CD8-positive, alpha-beta T cell (primary cell): ENCODE measurements at regions of chr2 and their contacts with region 1.

Region 1: DNA sequence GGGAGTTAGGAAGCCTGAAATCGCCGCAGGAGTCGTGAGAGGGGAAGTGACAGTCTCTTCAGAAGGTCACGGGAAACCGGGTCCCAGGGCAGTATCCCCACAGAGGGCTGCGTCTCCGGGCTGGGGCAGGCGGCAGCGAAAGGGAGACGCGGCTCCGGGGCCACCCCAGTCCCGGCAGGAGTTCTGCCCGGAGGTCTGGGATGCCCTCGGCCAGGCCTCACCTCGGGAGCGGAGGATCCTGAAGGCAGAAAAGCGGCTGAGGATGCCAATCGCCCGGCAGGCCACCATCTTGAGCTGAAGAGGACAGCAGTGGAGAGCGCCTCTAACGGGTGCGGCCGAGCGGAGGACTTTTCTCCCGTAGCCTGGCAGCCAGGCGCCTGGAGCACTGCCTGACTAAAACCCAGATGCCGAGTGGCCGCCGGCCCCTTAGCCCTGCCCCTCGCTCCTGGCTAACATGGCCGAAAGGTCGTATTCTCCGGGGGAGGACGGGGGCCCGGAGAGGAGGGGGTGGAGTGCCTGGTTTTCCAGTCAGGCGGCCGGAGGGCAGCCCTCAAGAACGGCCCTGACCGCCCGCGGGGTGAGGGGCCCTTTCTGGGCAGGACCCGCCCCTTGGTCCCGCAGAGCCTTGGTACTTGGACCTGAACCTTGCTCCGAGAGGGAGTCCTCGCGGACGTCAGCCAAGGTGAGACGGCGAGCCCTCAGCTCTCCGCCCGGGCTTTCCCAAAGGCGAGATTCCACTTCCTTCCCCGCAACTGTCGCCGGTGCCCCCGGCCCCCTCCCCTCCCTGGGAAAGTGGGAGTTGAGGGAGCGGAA is at the starts of genes HADHA and HADHB:
- DNase-seq: peak; percentile 72 to 91 (median 84)
- ATAC-seq: peak; percentile 82
- H3K4me3 ChIP-seq: peak within 1 kb of the TSS; percentile 99
- H3K4me3 Mint-ChIP-seq: peak within 1 kb of the TSS; percentile 99
- H3K27ac ChIP-seq: peak within 1 kb of the TSS; percentile 99
- H3K27ac Mint-ChIP-seq: peak within 1 kb of the TSS; percentile 100
- H3K4me1 ChIP-seq: peaks cover 22% of the 10 kb centered on the region
- H3K4me1 Mint-ChIP-seq: peaks cover 60% of the 10 kb centered on the region
- H3K27me3 ChIP-seq: no peaks in the 10 kb centered on the region
- H3K27me3 Mint-ChIP-seq: no peaks in the 10 kb centered on the region
- CTCF ChIP-seq: no peak
- total RNA-seq, gene HADHA: 66.8 to 69.4 TPM
- total RNA-seq, gene HADHB: 26.0 to 26.1 TPM

Region 2: DNA sequence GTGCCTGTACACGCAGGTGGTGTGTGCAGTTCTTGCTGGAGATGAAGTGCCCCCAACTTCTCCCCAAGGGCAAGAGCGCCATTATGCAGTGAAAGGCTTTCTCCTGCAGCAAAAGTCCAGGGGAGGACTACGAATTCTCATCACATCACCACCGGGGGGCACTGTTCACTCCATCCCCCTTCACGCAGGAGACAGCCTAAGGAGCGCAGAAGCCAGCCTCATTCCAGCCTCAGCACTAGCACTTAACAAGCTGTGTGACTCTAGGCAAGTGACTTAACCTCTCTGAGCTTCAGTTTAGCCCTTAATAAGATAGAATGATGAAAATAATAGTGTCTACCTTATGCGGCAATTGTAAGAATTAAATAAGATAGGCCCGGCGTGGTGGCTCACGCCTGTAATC is 935.1 kb before region 1 on chr2:
- CTCF ChIA-PET with region 1: no interaction called
- POLR2A ChIA-PET with region 1: no interaction called
- intact Hi-C with region 1: no loop called
- DNase-seq: peak; percentile 40 to 80 (median 75)
- ATAC-seq: peak; percentile 39
- H3K4me3 ChIP-seq: no peak overlapping the region
- H3K4me3 Mint-ChIP-seq: peak overlapping the region; percentile 11
- H3K27ac ChIP-seq: no peak overlapping the region
- H3K27ac Mint-ChIP-seq: peak overlapping the region; percentile 79
- H3K4me1 ChIP-seq: peaks cover 90% of the 10 kb centered on the region
- H3K4me1 Mint-ChIP-seq: peaks cover 85% of the 10 kb centered on the region
- H3K27me3 ChIP-seq: no peaks in the 10 kb centered on the region
- H3K27me3 Mint-ChIP-seq: no peaks in the 10 kb centered on the region
- CTCF ChIP-seq: peak; percentile 51

Region 3: GRCh38 chr2:25982273-25982967 is 262.1 kb before region 1 on chr2 and contains the start of gene KIF3C:
- CTCF ChIA-PET with region 1: no interaction called
- POLR2A ChIA-PET with region 1: no interaction called
- intact Hi-C with region 1: loop called (anchors 5 kb)
- DNase-seq: peak; percentile 46 to 84 (median 76)
- ATAC-seq: peak; percentile 92
- H3K4me3 ChIP-seq: peak within 1 kb of the TSS; percentile 61 to 81
- H3K4me3 Mint-ChIP-seq: peak within 1 kb of the TSS; percentile 88
- H3K27ac ChIP-seq: peak within 1 kb of the TSS; percentile 26 to 28
- H3K27ac Mint-ChIP-seq: peak within 1 kb of the TSS; percentile 79
- H3K4me1 ChIP-seq: peaks cover 11% of the 10 kb centered on the region
- H3K4me1 Mint-ChIP-seq: peaks cover 17% of the 10 kb centered on the region
- H3K27me3 ChIP-seq: no peaks in the 10 kb centered on the region
- H3K27me3 Mint-ChIP-seq: no peaks in the 10 kb centered on the region
- CTCF ChIP-seq: no peak
- total RNA-seq, gene KIF3C: 1.5 to 2.3 TPM

Region 4: GRCh38 chr2:26299471-26300101 is 55.1 kb after region 1 on chr2:
- CTCF ChIA-PET with region 1: no interaction called
- POLR2A ChIA-PET with region 1: interaction called, 11 read pairs
- intact Hi-C with region 1: loop called (anchors 1 kb)
- DNase-seq: peak in 6 of 9 experiments; percentile 13 to 64 (median 29)
- ATAC-seq: peak; percentile 49
- H3K4me3 ChIP-seq: peak overlapping the region; percentile 78 to 84
- H3K4me3 Mint-ChIP-seq: no peak overlapping the region
- H3K27ac ChIP-seq: peak overlapping the region; percentile 68 to 80
- H3K27ac Mint-ChIP-seq: no peak overlapping the region
- H3K4me1 ChIP-seq: peaks cover 19% of the 10 kb centered on the region
- H3K4me1 Mint-ChIP-seq: no peaks in the 10 kb centered on the region
- H3K27me3 ChIP-seq: no peaks in the 10 kb centered on the region
- H3K27me3 Mint-ChIP-seq: no peaks in the 10 kb centered on the region
- CTCF ChIP-seq: no peak

Region 5: GRCh38 chr2:27914041-27914804 is 1669.7 kb after region 1 on chr2:
- CTCF ChIA-PET with region 1: no interaction called
- POLR2A ChIA-PET with region 1: no interaction called
- intact Hi-C with region 1: no loop called
- DNase-seq: no peak
- ATAC-seq: no peak
- H3K4me3 ChIP-seq: no peak overlapping the region
- H3K4me3 Mint-ChIP-seq: no peak overlapping the region
- H3K27ac ChIP-seq: no peak overlapping the region
- H3K27ac Mint-ChIP-seq: no peak overlapping the region
- H3K4me1 ChIP-seq: no peaks in the 10 kb centered on the region
- H3K4me1 Mint-ChIP-seq: peaks cover 19% of the 10 kb centered on the region
- H3K27me3 ChIP-seq: no peaks in the 10 kb centered on the region
- H3K27me3 Mint-ChIP-seq: no peaks in the 10 kb centered on the region
- CTCF ChIP-seq: no peak